ENCODE measurements at regions of chr9 and their contacts with region 1.

Region 1: DNA sequence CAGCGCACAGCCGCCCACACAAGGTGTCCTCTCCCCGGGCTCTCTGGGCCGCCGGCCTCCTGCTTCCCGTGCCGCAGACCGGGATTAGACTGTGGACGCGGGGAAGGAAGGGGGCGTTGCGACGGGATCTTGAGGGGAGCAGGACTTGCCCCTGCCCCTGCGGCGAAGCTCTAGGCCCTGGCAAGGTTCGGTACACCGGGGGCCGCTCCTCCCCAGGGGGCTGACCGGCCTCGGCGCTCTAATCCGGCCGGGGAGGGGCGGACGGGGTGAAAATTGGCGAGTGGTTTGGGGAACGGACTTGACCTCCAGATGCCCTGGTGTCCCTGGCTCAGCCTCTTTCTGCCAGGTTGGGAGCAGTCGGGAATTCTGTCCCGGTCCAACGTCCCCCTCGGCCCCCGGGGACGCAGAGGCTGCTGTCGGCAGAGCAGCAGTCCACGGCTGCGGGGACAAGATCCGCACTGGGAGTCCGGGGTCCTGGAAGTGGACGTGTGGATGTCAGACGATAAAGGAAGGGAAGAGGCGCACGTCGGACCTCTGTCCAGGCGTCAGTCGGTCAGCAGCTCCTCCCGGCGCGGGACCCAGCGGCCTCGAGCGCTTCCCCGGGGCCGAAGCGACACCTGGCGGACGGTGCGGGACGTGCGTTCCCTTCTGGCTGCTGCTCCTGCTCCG is 1.9 kb upstream of the CNTFR start:
- DNase-seq: peak; percentile 75 to 90 (median 86)
- H3K4me3 ChIP-seq: peak overlapping the region in 1 of 4 donors; percentile 25
- H3K27ac ChIP-seq: peak overlapping the region in 2 of 5 donors; percentile 13 to 29
- H3K4me1 ChIP-seq: peaks cover 0 to 4% of the 10 kb centered on the region in 2 donors
- H3K27me3 ChIP-seq: peaks cover 25% of the 10 kb centered on the region
- CTCF ChIP-seq: peak; percentile 78 to 96 (median 86)
- POLR2A ChIP-seq: no peak

Region 2: DNA sequence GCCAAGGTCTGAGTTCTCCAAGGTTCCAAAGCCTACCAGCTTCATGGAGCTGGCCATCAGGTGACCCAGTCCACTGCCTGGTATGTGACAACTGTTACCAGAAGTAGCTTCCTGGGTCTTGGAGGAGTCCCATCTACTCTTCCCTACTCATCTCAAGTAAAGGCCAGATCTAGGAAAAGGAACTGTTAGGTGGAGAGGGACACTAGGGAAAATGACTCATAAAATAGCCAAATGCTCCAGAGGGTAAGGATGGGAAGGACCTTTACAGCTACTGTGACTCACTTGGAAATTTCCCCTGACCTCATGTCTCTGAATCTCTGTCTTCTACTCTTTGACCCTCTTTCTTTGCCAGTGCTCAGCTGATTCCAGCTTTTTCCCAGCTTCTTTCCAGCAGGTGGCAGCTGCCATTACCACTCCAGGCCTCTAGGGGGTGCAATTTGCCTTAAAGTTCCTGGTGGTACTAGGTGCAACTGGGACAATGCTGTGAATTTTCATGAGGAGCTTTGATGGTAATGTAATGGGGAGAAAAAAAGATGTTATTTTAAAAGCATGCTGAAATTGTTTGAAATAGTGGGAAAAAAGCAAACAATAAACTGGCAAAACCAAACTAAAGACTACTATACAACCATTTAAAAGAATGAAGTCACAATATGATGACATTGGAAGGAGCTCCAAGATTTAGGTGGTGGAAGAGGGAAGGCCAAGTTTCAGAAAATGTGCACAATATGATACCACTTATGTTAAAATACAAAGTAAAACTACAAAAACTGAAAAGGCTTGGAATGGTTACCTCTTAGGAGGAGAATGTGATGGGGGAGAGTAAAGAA is 187.6 kb before region 1 on chr9:
- intact Hi-C with region 1: loop called in 1 of 2 experiments (anchors 5 kb)
- DNase-seq: peak; percentile 76 to 93 (median 83)
- H3K4me3 ChIP-seq: no peak overlapping the region
- H3K27ac ChIP-seq: no peak overlapping the region
- H3K4me1 ChIP-seq: no peaks in the 10 kb centered on the region
- H3K27me3 ChIP-seq: no peaks in the 10 kb centered on the region
- CTCF ChIP-seq: peak; percentile 94 to 97 (median 96)
- POLR2A ChIP-seq: no peak

Region 3: DNA sequence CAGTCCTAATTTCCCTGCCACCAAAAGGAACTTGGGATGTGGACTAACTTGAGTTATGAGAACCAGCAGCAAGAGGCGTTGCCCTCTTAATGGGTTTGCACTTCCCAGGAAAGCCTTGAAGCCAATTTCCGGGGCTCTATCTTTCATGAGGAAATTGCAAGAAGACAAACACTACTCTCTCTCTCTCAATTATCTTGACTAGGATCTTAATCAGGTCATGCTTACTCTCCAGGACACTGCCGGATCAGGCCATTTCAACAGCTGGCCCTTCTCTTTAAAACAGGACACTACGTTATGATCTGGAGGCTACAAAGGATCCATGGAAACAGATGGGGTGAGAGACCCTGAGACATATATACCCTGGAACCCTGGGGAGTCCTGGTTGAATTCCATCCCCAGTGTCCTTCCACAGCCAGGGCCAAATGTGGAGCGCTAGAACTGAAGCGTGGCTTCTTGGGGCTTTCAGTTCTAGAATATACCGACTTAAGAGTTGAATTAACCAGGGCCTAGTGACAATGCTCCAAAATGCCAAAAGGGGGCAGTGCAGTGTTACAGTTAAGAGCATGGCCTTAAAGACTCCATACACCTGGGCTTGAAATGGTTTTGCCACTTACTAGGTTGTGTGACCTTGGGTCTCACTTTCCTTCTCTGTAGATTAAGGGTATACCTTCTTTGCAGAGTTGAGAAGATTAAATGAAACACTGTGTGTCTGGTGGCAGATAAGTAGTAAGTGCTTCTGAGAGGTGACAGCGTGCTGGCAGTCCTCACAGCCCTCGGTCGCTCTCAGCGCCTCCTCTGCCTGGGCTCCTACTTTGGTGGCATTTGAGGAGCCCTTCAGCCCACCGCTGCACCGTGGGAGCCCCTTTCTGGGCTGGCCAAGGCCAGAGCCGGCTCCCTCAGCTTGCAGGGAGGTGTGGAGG is 154.1 kb before region 1 on chr9:
- intact Hi-C with region 1: loop called in 1 of 2 experiments (anchors 10 kb)
- DNase-seq: peak; percentile 46 to 88 (median 63)
- H3K4me3 ChIP-seq: no peak overlapping the region
- H3K27ac ChIP-seq: no peak overlapping the region
- H3K4me1 ChIP-seq: peaks cover 0 to 3% of the 10 kb centered on the region in 2 donors
- H3K27me3 ChIP-seq: no peaks in the 10 kb centered on the region
- CTCF ChIP-seq: peak; percentile 51 to 83 (median 76)
- POLR2A ChIP-seq: no peak

Region 4: GRCh38 chr9:34546834-34547827 is 44.3 kb before region 1 on chr9:
- intact Hi-C with region 1: loop called (anchors 2 to 5 kb)
- DNase-seq: peak in 6 of 7 donors; percentile 40 to 69 (median 60)
- H3K4me3 ChIP-seq: no peak overlapping the region
- H3K27ac ChIP-seq: no peak overlapping the region
- H3K4me1 ChIP-seq: no peaks in the 10 kb centered on the region
- H3K27me3 ChIP-seq: no peaks in the 10 kb centered on the region
- CTCF ChIP-seq: peak; percentile 47 to 57 (median 54)
- POLR2A ChIP-seq: no peak

Measured in adrenal gland (tissue), 19 donors.